Breast epithelium (tissue), 4 donors: ENCODE measurements at regions of chr6 and their contacts with region 1.

Region 1: GRCh38 chr6:85261271-85261670 is 188.6 kb upstream of the NT5E start:
- DNase-seq: no peak
- H3K4me3 ChIP-seq: no peak overlapping the region
- H3K27ac ChIP-seq: no peak overlapping the region
- H3K4me1 ChIP-seq: no peaks in the 10 kb centered on the region
- H3K27me3 ChIP-seq: no peaks in the 10 kb centered on the region
- CTCF ChIP-seq: no peak
- POLR2A ChIP-seq: no peak

Region 2: GRCh38 chr6:85291326-85291725 is 30.1 kb after region 1 on chr6:
- intact Hi-C with region 1: loop called (anchors 2 kb)
- DNase-seq: no peak
- H3K4me3 ChIP-seq: no peak overlapping the region
- H3K27ac ChIP-seq: no peak overlapping the region
- H3K4me1 ChIP-seq: no peaks in the 10 kb centered on the region
- H3K27me3 ChIP-seq: no peaks in the 10 kb centered on the region
- CTCF ChIP-seq: no peak
- POLR2A ChIP-seq: no peak

Region 3: DNA sequence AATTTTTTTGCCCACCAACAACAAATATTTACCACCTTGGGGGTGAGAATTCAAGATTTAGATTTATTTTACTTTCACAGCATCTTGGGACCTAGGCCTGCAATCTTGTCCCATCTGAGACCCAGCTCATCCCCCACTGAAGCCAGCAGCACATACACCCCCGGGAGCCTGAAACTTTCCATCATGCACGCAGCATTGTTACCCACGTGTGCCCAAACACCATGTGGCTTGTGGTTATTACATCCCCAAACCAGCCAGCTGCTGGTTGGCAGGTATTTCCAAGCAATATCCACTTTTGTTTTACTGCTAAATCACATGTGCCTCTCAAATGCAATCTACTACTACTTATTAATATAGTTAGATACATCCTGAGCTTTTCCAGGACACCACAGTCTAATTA is 39.3 kb after region 1 on chr6:
- intact Hi-C with region 1: loop called (anchors 2 kb)
- DNase-seq: no peak
- H3K4me3 ChIP-seq: no peak overlapping the region
- H3K27ac ChIP-seq: no peak overlapping the region
- H3K4me1 ChIP-seq: no peaks in the 10 kb centered on the region
- H3K27me3 ChIP-seq: no peaks in the 10 kb centered on the region
- CTCF ChIP-seq: no peak
- POLR2A ChIP-seq: no peak